IMR-90 (cell line): ENCODE measurements at regions of chr3 and their contacts with region 1.

Region 1: DNA sequence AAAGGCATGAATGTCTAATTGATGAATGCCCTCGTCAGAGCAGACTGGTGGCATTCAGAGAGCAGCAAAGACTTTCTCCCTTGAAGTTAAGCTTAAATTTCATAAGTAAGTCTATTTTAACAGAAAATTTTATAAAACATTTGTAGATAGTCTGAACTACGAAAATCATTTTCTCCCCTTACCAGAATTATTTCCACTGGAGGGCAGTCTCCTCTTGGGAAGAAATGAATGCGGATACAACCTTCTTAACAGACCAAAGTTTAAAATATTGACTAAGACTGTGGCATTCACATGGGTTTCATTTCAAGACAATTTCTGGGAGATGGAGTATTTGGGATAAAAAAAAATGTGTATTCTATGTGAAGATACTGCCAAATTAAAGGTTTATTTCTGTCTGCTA is 669.0 kb downstream of the FHIT start:
- DNase-seq: no peak
- ATAC-seq: no peak
- H3K4me3 ChIP-seq: no peak overlapping the region
- H3K27ac ChIP-seq: no peak overlapping the region
- H3K4me1 ChIP-seq: peaks cover 2% of the 10 kb centered on the region; the same call in 1 of the 2 replicates
- H3K27me3 ChIP-seq: no peaks in the 10 kb centered on the region
- CTCF ChIP-seq: peak; percentile 18; the same call in 1 of the 2 replicates
- POLR2A ChIP-seq: no peak
- RAD21 ChIP-seq: no peak

Region 2: GRCh38 chr3:60536420-60536819 is 45.9 kb before region 1 on chr3:
- CTCF ChIA-PET with region 1: no interaction called
- POLR2A ChIA-PET with region 1: no interaction called
- dilution Hi-C with region 1: no loop called
- in situ Hi-C with region 1: no loop called
- intact Hi-C with region 1: no loop called
- DNase-seq: no peak
- ATAC-seq: no peak
- H3K4me3 ChIP-seq: no peak overlapping the region
- H3K27ac ChIP-seq: no peak overlapping the region
- H3K4me1 ChIP-seq: no peaks in the 10 kb centered on the region
- H3K27me3 ChIP-seq: no peaks in the 10 kb centered on the region
- CTCF ChIP-seq: no peak
- POLR2A ChIP-seq: no peak
- RAD21 ChIP-seq: no peak

Region 3: DNA sequence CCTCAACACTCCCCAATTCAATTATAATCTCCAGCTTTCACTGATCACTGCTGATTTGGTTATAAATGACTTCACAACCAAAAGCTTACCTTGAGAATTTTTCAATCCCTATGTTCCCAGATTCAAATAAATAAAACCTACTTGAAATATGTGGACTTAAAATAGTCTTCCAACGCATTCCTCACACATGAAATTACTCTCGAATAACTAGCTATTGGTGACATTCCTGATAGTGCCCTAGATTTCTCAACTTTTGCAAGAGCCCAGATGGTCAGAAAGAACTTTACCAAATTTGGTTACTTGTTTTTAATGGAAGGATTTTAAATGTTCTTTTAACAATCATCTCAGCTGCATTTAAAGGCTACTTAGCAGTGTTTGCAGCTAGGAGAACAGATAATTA is 63.5 kb after region 1 on chr3:
- CTCF ChIA-PET with region 1: no interaction called
- POLR2A ChIA-PET with region 1: no interaction called
- dilution Hi-C with region 1: no loop called
- in situ Hi-C with region 1: no loop called
- intact Hi-C with region 1: no loop called
- DNase-seq: no peak
- ATAC-seq: no peak
- H3K4me3 ChIP-seq: no peak overlapping the region
- H3K27ac ChIP-seq: no peak overlapping the region
- H3K4me1 ChIP-seq: no peaks in the 10 kb centered on the region
- H3K27me3 ChIP-seq: no peaks in the 10 kb centered on the region
- CTCF ChIP-seq: no peak
- POLR2A ChIP-seq: no peak
- RAD21 ChIP-seq: no peak

Region 4: DNA sequence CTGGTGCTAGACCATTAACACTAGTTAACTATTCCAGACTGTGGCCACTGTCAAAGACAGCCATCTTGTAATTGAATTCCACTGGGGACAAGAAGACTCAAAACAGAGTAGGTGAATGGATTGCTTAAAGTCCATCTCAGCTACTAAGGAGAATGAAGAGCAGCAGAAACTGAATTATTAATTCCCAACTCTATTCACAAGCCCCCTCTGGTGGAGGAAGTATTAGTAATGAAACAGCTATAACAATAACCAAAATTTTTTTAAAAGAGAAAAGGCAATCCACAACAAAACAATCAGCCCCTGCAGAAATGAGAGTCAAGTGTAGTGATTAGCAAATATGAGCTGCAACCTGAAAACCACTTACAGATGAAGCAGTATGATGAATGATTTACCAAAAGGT is 366.2 kb after region 1 on chr3:
- CTCF ChIA-PET with region 1: no interaction called
- POLR2A ChIA-PET with region 1: no interaction called
- dilution Hi-C with region 1: no loop called
- in situ Hi-C with region 1: no loop called
- intact Hi-C with region 1: loop called (anchors 1 kb)
- DNase-seq: no peak
- ATAC-seq: no peak
- H3K4me3 ChIP-seq: no peak overlapping the region
- H3K27ac ChIP-seq: no peak overlapping the region
- H3K4me1 ChIP-seq: no peaks in the 10 kb centered on the region
- H3K27me3 ChIP-seq: no peaks in the 10 kb centered on the region
- CTCF ChIP-seq: peak; percentile 39
- POLR2A ChIP-seq: no peak
- RAD21 ChIP-seq: peak; percentile 35; the same call in 1 of the 2 replicates